Mammary epithelial cell (primary cell): ENCODE measurements at regions of chr16 and their contacts with region 1.

Region 1: DNA sequence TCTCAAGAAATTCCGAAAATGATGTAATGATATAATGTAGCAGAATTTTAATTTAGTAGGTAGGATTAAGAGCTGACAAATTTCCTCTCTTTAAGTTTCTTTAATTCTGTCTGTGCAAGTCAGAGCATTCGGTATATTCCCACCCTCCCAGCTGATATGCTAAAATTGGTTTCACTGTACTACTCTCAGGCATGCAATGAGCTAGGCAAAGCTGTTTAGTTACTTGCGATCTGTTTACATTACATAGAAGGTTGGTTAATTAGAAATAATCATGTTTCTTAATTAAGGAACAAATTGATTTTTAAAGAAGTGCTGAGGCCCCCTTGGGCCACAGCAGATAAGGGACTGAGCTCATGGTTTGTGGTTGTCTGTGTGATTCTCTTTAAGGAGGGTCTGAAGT is 432.8 kb upstream of the HSBP1 start:
- DNase-seq: no peak
- H3K4me3 ChIP-seq: no peak overlapping the region
- H3K27ac ChIP-seq: no peak overlapping the region
- H3K4me1 ChIP-seq: no peaks in the 10 kb centered on the region
- H3K27me3 ChIP-seq: no peaks in the 10 kb centered on the region
- CTCF ChIP-seq: no peak

Region 2: DNA sequence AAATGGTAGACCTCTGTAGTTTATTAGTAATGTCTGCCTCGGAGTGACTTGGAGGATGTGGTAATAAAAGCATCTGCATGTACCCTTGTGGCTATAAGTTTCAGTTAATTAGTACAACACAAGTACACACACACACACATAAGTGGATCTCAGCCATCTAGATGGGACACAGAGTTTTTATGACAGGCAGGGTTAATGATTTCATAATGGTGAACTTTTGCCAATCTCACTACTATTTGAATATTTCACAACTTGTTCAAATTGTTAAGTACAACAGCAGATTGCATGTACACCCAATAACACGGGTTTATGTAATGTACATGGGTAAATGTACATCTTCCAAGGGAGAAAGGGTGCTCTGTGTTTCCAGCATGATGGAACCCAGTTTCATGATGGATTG is 78.5 kb before region 1 on chr16:
- CTCF ChIA-PET with region 1: no interaction called
- dilution Hi-C with region 1: loop called (anchors 5 kb)
- in situ Hi-C with region 1: no loop called
- intact Hi-C with region 1: no loop called
- DNase-seq: no peak
- H3K4me3 ChIP-seq: no peak overlapping the region
- H3K27ac ChIP-seq: no peak overlapping the region
- H3K4me1 ChIP-seq: no peaks in the 10 kb centered on the region
- H3K27me3 ChIP-seq: no peaks in the 10 kb centered on the region
- CTCF ChIP-seq: no peak

Region 3: GRCh38 chr16:84239141-84239769 is 864.3 kb after region 1 on chr16:
- CTCF ChIA-PET with region 1: no interaction called
- dilution Hi-C with region 1: no loop called
- in situ Hi-C with region 1: no loop called
- intact Hi-C with region 1: no loop called
- DNase-seq: no peak
- H3K4me3 ChIP-seq: no peak overlapping the region
- H3K27ac ChIP-seq: no peak overlapping the region
- H3K4me1 ChIP-seq: no peaks in the 10 kb centered on the region
- H3K27me3 ChIP-seq: peaks cover 9% of the 10 kb centered on the region
- CTCF ChIP-seq: no peak